ENCODE measurements at regions of chr22 and their contacts with region 1.

Region 1: DNA sequence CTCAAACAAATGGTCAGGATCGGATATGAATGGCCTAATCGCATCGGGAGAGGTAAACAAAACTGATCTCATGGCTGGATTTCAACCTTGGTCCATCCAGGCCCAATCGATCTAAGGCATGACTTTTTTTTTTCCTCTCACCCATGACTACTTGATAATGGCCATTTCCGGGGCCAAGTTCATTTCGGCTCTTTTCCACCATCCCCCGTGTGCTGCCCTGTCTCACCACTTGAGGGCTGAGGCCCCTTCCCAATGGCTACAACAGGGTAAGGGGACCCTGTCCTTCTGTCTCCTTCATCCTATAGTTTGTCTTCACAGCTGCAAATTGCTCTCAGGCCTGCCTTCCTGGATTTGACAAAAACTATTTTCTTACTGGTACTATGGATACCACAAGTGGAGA is 26.7 kb downstream of the GRAP2 start:
- DNase-seq: peak; percentile 62
- H3K4me3 Mint-ChIP-seq: no peak overlapping the region
- H3K27ac Mint-ChIP-seq: no peak overlapping the region
- H3K4me1 Mint-ChIP-seq: peaks cover 44% of the 10 kb centered on the region
- H3K27me3 Mint-ChIP-seq: no peaks in the 10 kb centered on the region

Region 2: DNA sequence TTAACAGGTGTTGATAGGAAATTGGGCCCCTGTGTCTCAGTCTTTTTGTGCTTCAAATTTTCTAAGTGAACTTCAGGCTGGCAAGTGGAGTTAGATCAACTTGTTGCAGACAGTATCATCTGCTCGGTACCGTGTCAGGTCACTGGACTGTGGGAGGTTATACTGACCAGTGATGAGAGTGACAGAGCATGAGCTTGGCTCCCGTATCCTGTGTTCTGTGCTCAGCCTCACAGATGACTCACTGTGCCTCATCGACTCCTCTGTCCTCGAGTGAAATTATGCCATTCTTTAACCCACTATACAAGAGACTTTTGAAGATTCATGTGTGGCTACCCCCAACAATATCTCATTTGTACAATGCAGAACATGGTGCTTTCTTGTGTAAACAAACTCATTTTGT is 18.8 kb before region 1 on chr22:
- CTCF ChIA-PET with region 1: interaction called, 45 read pairs
- POLR2A ChIA-PET with region 1: interaction called, 219 read pairs
- intact Hi-C with region 1: no loop called
- DNase-seq: peak; percentile 69
- H3K4me3 Mint-ChIP-seq: peak overlapping the region; percentile 83
- H3K27ac Mint-ChIP-seq: peak overlapping the region; percentile 93
- H3K4me1 Mint-ChIP-seq: peaks cover 58% of the 10 kb centered on the region
- H3K27me3 Mint-ChIP-seq: no peaks in the 10 kb centered on the region

Region 3: GRCh38 chr22:39946503-39947219 is 19.1 kb after region 1 on chr22:
- CTCF ChIA-PET with region 1: interaction called, 37 read pairs
- POLR2A ChIA-PET with region 1: interaction called, 3 read pairs
- intact Hi-C with region 1: no loop called
- DNase-seq: no peak
- H3K4me3 Mint-ChIP-seq: peak overlapping the region; percentile 51
- H3K27ac Mint-ChIP-seq: peak overlapping the region; percentile 86
- H3K4me1 Mint-ChIP-seq: peaks cover 93% of the 10 kb centered on the region
- H3K27me3 Mint-ChIP-seq: no peaks in the 10 kb centered on the region

Region 4: GRCh38 chr22:40094485-40094884 is 166.9 kb after region 1 on chr22:
- CTCF ChIA-PET with region 1: no interaction called
- POLR2A ChIA-PET with region 1: no interaction called
- intact Hi-C with region 1: no loop called
- DNase-seq: no peak
- H3K4me3 Mint-ChIP-seq: peak overlapping the region; percentile 65
- H3K27ac Mint-ChIP-seq: peak overlapping the region; percentile 80
- H3K4me1 Mint-ChIP-seq: peaks cover 64% of the 10 kb centered on the region
- H3K27me3 Mint-ChIP-seq: no peaks in the 10 kb centered on the region

Measured in activated CD4-positive, alpha-beta memory T cell treated with anti-CD3 and anti-CD28 coated beads for 36 hours (primary cell).